OCI-LY7 (cell line): ENCODE measurements at regions of chr2 and their contacts with region 1.

Region 1: DNA sequence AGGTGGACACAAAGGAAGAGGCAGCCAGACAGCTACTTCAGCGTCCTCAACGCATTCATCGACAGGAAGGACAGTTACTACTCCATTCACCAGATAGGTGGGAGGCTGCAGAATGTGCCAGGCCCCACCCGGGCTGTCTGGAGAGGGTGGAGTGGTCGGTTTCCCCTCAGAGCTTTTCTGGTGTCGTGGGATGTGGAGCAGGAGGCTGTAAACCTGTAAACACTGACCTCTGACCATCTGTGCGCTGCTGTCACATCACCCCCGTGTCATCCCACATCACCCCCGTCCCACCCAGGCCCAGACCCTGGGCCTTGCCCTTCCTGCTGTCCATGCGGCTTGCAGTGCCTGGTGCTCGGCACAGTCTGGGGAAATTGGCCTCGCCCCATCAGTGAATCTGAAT is 17.1 kb downstream of the ATG4B start:
- DNase-seq: no peak
- H3K4me3 ChIP-seq: no peak overlapping the region
- H3K27ac ChIP-seq: no peak overlapping the region
- H3K4me1 ChIP-seq: no peaks in the 10 kb centered on the region
- CTCF ChIP-seq: no peak

Region 2: GRCh38 chr2:241686322-241686648 is 31.7 kb after region 1 on chr2:
- CTCF ChIA-PET with region 1: no interaction called
- POLR2A ChIA-PET with region 1: no interaction called
- intact Hi-C with region 1: no loop called
- DNase-seq: no peak
- H3K4me3 ChIP-seq: peak overlapping the region; percentile 90
- H3K27ac ChIP-seq: peak overlapping the region; percentile 69
- H3K4me1 ChIP-seq: peaks cover 17% of the 10 kb centered on the region
- CTCF ChIP-seq: no peak

Region 3: GRCh38 chr2:241741016-241741415 is 86.5 kb after region 1 on chr2:
- CTCF ChIA-PET with region 1: no interaction called
- POLR2A ChIA-PET with region 1: no interaction called
- intact Hi-C with region 1: no loop called
- DNase-seq: no peak
- H3K4me3 ChIP-seq: no peak overlapping the region
- H3K27ac ChIP-seq: no peak overlapping the region
- H3K4me1 ChIP-seq: no peaks in the 10 kb centered on the region
- CTCF ChIP-seq: no peak

Region 4: DNA sequence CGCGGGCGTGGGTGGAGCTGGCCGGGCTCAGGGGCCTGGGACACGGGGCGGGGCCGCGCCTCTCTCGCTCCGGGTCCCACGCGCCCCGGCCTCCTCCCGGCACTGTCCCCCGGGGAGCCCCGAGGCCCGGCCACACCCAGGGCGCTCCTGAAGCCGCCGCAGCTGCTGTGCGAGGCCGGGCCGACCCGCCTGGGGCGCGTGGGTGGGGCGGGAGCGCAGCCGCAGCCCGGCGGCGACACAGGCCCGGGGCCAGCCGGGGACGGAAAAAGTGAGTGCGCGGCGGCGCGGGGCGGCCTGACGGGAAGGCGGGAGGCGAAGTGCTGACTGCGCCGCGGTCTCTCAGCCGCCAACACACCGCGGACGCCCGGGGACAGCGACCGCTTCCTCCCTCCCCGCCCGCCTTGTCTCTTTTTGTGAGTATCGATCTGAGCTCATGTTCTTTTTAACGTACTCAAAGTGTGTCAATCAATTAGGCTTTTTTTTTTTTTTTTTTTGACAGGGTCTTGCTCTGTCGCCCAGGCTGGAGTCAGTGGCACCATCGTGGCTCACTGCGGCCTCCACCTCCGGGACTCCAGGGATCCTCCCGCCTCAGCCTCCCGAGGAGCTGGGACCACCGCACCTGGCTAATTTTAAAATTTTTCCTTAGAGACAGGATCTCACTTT is 189.6 kb after region 1 on chr2:
- CTCF ChIA-PET with region 1: no interaction called
- POLR2A ChIA-PET with region 1: no interaction called
- intact Hi-C with region 1: no loop called
- DNase-seq: no peak
- H3K4me3 ChIP-seq: no peak overlapping the region
- H3K27ac ChIP-seq: no peak overlapping the region
- H3K4me1 ChIP-seq: no peaks in the 10 kb centered on the region
- CTCF ChIP-seq: no peak

Region 5: GRCh38 chr2:242085941-242086621 is 431.5 kb after region 1 on chr2:
- CTCF ChIA-PET with region 1: no interaction called
- POLR2A ChIA-PET with region 1: interaction called, 11 read pairs
- intact Hi-C with region 1: no loop called
- DNase-seq: peak; percentile 50
- H3K4me3 ChIP-seq: peak overlapping the region; percentile 30
- H3K27ac ChIP-seq: peak overlapping the region; percentile 22
- H3K4me1 ChIP-seq: peaks cover 28% of the 10 kb centered on the region
- CTCF ChIP-seq: no peak